ENCODE measurements at regions of chr18 and their contacts with region 1.

Region 1: GRCh38 chr18:10878703-10879102 is 270.7 kb downstream of the PIEZO2 start:
- DNase-seq: peak; percentile 93
- ATAC-seq: peak; percentile 82
- H3K4me3 ChIP-seq: no peak overlapping the region
- H3K27ac ChIP-seq: peak overlapping the region; percentile 88
- H3K4me1 ChIP-seq: peaks cover 49% of the 10 kb centered on the region
- H3K27me3 ChIP-seq: no peaks in the 10 kb centered on the region
- CTCF ChIP-seq: no peak
- EP300 ChIP-seq: peak; percentile 90 to 96
- POLR2A ChIP-seq: no peak
- RAD21 ChIP-seq: 0 out of 2 replicates have a peak, but pooled peaks have one; percentile 17

Region 2: DNA sequence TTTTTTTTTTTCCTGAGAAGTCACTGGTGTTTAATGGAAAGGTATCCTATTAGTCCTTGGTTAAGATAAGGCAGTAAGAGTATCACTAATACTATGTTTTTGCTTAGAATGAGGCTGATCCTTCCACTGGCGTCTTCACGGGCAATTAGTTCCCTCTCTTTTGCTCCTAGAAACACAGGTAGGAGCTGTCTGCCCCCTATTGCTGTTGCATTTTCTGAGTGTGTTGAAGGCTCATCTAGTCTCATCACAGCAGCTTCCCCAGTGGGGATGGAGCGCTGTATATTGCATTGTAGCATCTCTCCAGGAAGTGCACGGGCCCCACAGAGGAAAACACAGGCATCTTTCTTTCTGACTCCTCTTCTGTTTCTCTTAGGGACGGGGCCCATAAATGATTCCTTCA is 207.8 kb before region 1 on chr18:
- CTCF ChIA-PET with region 1: no interaction called
- POLR2A ChIA-PET with region 1: no interaction called
- RAD21 ChIA-PET with region 1: no interaction called
- SMC1A ChIA-PET with region 1: no interaction called
- in situ Hi-C with region 1: no loop called
- intact Hi-C with region 1: no loop called
- DNase-seq: no peak
- ATAC-seq: no peak
- H3K4me3 ChIP-seq: no peak overlapping the region
- H3K27ac ChIP-seq: no peak overlapping the region
- H3K4me1 ChIP-seq: no peaks in the 10 kb centered on the region
- H3K27me3 ChIP-seq: no peaks in the 10 kb centered on the region
- CTCF ChIP-seq: peak in 1 of 3 experiments; percentile 22; a peak in 1 of 6 replicates
- EP300 ChIP-seq: no peak
- POLR2A ChIP-seq: no peak
- RAD21 ChIP-seq: peak; percentile 38

Region 3: DNA sequence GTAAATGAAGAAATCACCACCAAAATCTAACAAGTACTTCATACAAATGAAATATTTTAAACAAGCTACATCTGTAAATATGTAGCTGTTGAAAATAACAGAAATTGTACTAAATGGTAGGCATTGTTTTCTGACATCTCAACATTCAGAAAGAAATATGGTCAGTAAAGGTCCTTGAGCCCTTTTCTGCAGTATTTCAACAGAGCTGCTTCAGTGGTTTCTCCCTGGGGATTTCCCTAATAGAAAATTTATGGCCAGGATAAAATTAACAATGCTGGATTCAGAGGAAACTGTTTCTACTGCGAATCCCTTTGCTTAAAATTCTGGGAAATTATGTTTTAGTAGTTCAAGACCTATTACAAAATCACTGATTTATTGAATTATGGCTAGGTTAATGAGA is 14.1 kb after region 1 on chr18:
- CTCF ChIA-PET with region 1: interaction called, 70 read pairs
- POLR2A ChIA-PET with region 1: interaction called, 18 read pairs
- RAD21 ChIA-PET with region 1: interaction called, 53 read pairs
- SMC1A ChIA-PET with region 1: interaction called, 96 read pairs
- in situ Hi-C with region 1: no loop called
- intact Hi-C with region 1: no loop called
- DNase-seq: no peak
- ATAC-seq: peak; percentile 29; the same call in 1 of the 3 replicates
- H3K4me3 ChIP-seq: no peak overlapping the region
- H3K27ac ChIP-seq: no peak overlapping the region
- H3K4me1 ChIP-seq: peaks cover 13% of the 10 kb centered on the region
- H3K27me3 ChIP-seq: no peaks in the 10 kb centered on the region
- CTCF ChIP-seq: no peak
- EP300 ChIP-seq: no peak
- POLR2A ChIP-seq: no peak
- RAD21 ChIP-seq: no peak

Region 4: GRCh38 chr18:10898417-10898974 is 19.8 kb after region 1 on chr18:
- CTCF ChIA-PET with region 1: interaction called, 3 read pairs
- POLR2A ChIA-PET with region 1: interaction called, 3 read pairs
- RAD21 ChIA-PET with region 1: interaction called, 53 read pairs
- SMC1A ChIA-PET with region 1: interaction called, 96 read pairs
- in situ Hi-C with region 1: no loop called
- intact Hi-C with region 1: loop called (anchors 1 kb)
- DNase-seq: no peak
- ATAC-seq: peak; percentile 86
- H3K4me3 ChIP-seq: peak overlapping the region; percentile 28; the same call in 1 of the 2 replicates
- H3K27ac ChIP-seq: peak overlapping the region; percentile 8; the same call in 1 of the 2 replicates
- H3K4me1 ChIP-seq: peaks cover 30% of the 10 kb centered on the region
- H3K27me3 ChIP-seq: no peaks in the 10 kb centered on the region
- CTCF ChIP-seq: no peak
- EP300 ChIP-seq: peak in 1 of 2 experiments; percentile 43; a peak in 1 of 4 replicates
- POLR2A ChIP-seq: no peak
- RAD21 ChIP-seq: no peak

Region 5: GRCh38 chr18:10973567-10974203 is 95.0 kb after region 1 on chr18:
- CTCF ChIA-PET with region 1: no interaction called
- POLR2A ChIA-PET with region 1: no interaction called
- RAD21 ChIA-PET with region 1: interaction called, 4 read pairs
- SMC1A ChIA-PET with region 1: interaction called, 11 read pairs
- in situ Hi-C with region 1: no loop called
- intact Hi-C with region 1: no loop called
- DNase-seq: no peak
- ATAC-seq: peak; percentile 85
- H3K4me3 ChIP-seq: no peak overlapping the region
- H3K27ac ChIP-seq: peak overlapping the region; percentile 62; the same call in 1 of the 2 replicates
- H3K4me1 ChIP-seq: peaks cover 25% of the 10 kb centered on the region
- H3K27me3 ChIP-seq: no peaks in the 10 kb centered on the region
- CTCF ChIP-seq: no peak
- EP300 ChIP-seq: no peak
- POLR2A ChIP-seq: no peak
- RAD21 ChIP-seq: no peak

Region 6: GRCh38 chr18:11034884-11035283 is 156.2 kb after region 1 on chr18:
- CTCF ChIA-PET with region 1: interaction called, 12 read pairs
- POLR2A ChIA-PET with region 1: interaction called, 5 read pairs
- RAD21 ChIA-PET with region 1: interaction called, 15 read pairs
- SMC1A ChIA-PET with region 1: interaction called, 17 read pairs
- in situ Hi-C with region 1: no loop called
- intact Hi-C with region 1: no loop called
- DNase-seq: no peak
- ATAC-seq: peak; percentile 83
- H3K4me3 ChIP-seq: peak overlapping the region; percentile 6; the same call in 1 of the 2 replicates
- H3K27ac ChIP-seq: peak overlapping the region; percentile 52
- H3K4me1 ChIP-seq: peaks cover 38% of the 10 kb centered on the region
- H3K27me3 ChIP-seq: no peaks in the 10 kb centered on the region
- CTCF ChIP-seq: no peak
- EP300 ChIP-seq: no peak
- POLR2A ChIP-seq: no peak
- RAD21 ChIP-seq: no peak

Measured in GM12878 (cell line).